ENCODE measurements at regions of chr4 and their contacts with region 1.

Region 1: GRCh38 chr4:153785910-153786721 is 2.8 kb downstream of the SFRP2 start:
- DNase-seq: no peak
- H3K4me3 Mint-ChIP-seq: no peak overlapping the region
- H3K27ac Mint-ChIP-seq: no peak overlapping the region
- H3K4me1 Mint-ChIP-seq: peaks cover 19% of the 10 kb centered on the region
- H3K27me3 Mint-ChIP-seq: peaks cover 78% of the 10 kb centered on the region

Region 2: DNA sequence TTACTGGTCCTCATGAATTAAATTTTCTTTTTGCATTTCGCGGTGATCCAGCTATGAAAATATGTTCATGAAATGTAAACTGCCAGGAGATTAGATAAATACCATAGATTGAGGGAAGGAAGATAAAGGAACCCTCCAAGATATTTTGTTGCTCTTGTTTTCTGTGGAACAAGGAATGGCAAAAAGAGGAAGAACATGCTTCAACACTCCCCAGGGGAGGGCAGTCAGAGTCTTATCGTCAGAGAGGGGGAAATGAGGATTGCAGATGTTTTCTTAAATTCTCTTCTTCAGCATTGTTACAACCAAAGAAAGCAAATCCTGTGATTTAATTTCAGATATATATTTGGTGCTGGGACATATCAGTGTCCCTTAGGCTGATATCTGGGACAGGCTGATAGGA is 12.3 kb after region 1 on chr4:
- CTCF ChIA-PET with region 1: interaction called, 24 read pairs
- DNase-seq: no peak
- H3K4me3 Mint-ChIP-seq: no peak overlapping the region
- H3K27ac Mint-ChIP-seq: no peak overlapping the region
- H3K4me1 Mint-ChIP-seq: no peaks in the 10 kb centered on the region
- H3K27me3 Mint-ChIP-seq: peaks cover 36% of the 10 kb centered on the region

Region 3: DNA sequence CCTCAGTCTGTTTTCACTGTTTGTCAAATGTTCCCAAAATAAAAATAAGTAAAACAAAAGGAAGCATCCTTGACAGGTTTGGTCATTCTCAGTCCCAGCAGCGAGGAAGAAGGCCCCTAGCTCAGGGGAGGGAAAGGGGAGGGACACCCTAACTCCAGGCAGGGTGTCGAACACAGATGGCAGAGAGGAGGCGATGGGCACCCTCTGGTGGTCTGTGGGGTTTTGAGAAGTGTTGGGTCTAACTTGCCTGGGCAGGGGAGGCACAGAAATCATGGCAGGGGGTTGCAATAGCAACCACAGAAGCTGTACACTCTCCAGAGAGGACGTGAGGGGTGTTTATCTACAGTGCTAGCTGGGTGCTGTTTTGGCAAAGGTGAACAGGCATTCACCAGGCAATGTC is 232.5 kb after region 1 on chr4:
- CTCF ChIA-PET with region 1: interaction called, 12 read pairs
- DNase-seq: peak; percentile 24
- H3K4me3 Mint-ChIP-seq: no peak overlapping the region
- H3K27ac Mint-ChIP-seq: peak overlapping the region; percentile 7
- H3K4me1 Mint-ChIP-seq: no peaks in the 10 kb centered on the region
- H3K27me3 Mint-ChIP-seq: peaks cover 8% of the 10 kb centered on the region

Measured in activated naive CD4-positive, alpha-beta T cell treated with anti-CD3 and anti-CD28 coated beads, Interleukin-2, amount 10 ng/mL, durations not matched to agents 7 days and 5 days (primary cell).